ENCODE measurements at regions of chr10 and their contacts with region 1.

Region 1: GRCh38 chr10:70331486-70332268 is 47.9 kb upstream of the NPFFR1 start:
- DNase-seq: peak; percentile 93
- H3K4me3 ChIP-seq: peak overlapping the region; percentile 48
- H3K27ac ChIP-seq: peak overlapping the region; percentile 71
- H3K4me1 ChIP-seq: peaks cover 67% of the 10 kb centered on the region
- CTCF ChIP-seq: peak; percentile 80

Region 2: GRCh38 chr10:69742928-69743602 is 588.6 kb before region 1 on chr10:
- CTCF ChIA-PET with region 1: no interaction called
- POLR2A ChIA-PET with region 1: no interaction called
- intact Hi-C with region 1: no loop called
- DNase-seq: no peak
- H3K4me3 ChIP-seq: no peak overlapping the region
- H3K27ac ChIP-seq: no peak overlapping the region
- H3K4me1 ChIP-seq: no peaks in the 10 kb centered on the region
- CTCF ChIP-seq: peak; percentile 64

Region 3: DNA sequence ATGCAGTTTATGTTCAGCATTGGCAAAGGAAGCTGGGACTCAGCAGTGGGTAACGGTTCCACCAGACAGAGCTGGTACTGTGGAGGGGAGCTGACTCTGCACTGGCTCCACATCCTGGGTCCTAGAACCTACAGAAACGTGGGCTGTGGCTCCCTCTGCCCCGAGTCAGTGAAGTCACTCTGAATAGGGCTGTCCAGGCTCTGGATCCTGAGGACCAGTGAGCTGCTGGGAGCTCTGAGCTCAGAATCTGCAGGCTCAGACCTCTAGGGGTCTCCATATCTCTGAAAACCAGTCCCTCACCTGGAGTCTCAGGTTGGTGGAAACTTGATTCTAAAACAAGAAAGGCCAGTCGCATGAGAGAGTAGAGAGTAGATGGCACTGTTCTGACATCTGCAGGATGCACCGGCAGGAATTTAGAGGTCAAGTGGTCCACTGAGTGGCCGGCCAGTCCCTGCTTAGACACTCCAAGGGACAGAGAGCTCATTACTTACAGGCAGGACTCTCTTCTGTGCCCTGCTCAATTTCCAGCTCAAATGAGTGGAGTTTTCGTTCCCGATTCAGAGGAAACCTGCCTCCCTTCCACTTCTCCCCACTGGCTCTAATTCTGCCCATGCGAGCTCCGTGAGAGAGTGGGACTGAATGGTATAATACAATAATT is 66.5 kb before region 1 on chr10:
- CTCF ChIA-PET with region 1: interaction called, 6 read pairs
- POLR2A ChIA-PET with region 1: interaction called, 3 read pairs
- intact Hi-C with region 1: loop called (anchors 1 kb)
- DNase-seq: peak; percentile 78
- H3K4me3 ChIP-seq: no peak overlapping the region
- H3K27ac ChIP-seq: no peak overlapping the region
- H3K4me1 ChIP-seq: peaks cover 7% of the 10 kb centered on the region
- CTCF ChIP-seq: peak; percentile 90

Region 4: GRCh38 chr10:70272925-70273316 is 58.8 kb before region 1 on chr10:
- CTCF ChIA-PET with region 1: interaction called, 4 read pairs
- POLR2A ChIA-PET with region 1: interaction called, 3 read pairs
- intact Hi-C with region 1: loop called (anchors 1 kb)
- DNase-seq: peak; percentile 73
- H3K4me3 ChIP-seq: peak overlapping the region; percentile 32
- H3K27ac ChIP-seq: peak overlapping the region; percentile 31
- H3K4me1 ChIP-seq: peaks cover 35% of the 10 kb centered on the region
- CTCF ChIP-seq: peak; percentile 87